Esophagus muscularis mucosa (tissue), 4 donors: ENCODE measurements at regions of chr3 and their contacts with region 1.

Region 1: GRCh38 chr3:38346587-38347410 is at the start of gene XYLB:
- DNase-seq: no peak
- H3K4me3 ChIP-seq: peak within 1 kb of the TSS; percentile 62 to 88 (median 75)
- H3K27ac ChIP-seq: peak within 1 kb of the TSS in 3 of 4 donors; percentile 42 to 69 (median 64)
- H3K4me1 ChIP-seq: peaks cover 5 to 20% (median 18%) of the 10 kb centered on the region in 4 donors
- H3K27me3 ChIP-seq: no peaks in the 10 kb centered on the region
- CTCF ChIP-seq: peak; percentile 85 to 91 (median 87)
- EP300 ChIP-seq: no peak
- POLR2A ChIP-seq: no peak
- total RNA-seq, gene XYLB: 0.65 to 2.5 (median 1.2) TPM

Region 2: GRCh38 chr3:37580237-37580636 is 766.6 kb before region 1 on chr3:
- intact Hi-C with region 1: no loop called
- DNase-seq: peak; percentile 93
- H3K4me3 ChIP-seq: no peak overlapping the region
- H3K27ac ChIP-seq: peak overlapping the region; percentile 13 to 60 (median 42)
- H3K4me1 ChIP-seq: peaks cover 20 to 32% (median 30%) of the 10 kb centered on the region in 4 donors
- H3K27me3 ChIP-seq: no peaks in the 10 kb centered on the region
- CTCF ChIP-seq: no peak
- EP300 ChIP-seq: no peak
- POLR2A ChIP-seq: no peak

Region 3: DNA sequence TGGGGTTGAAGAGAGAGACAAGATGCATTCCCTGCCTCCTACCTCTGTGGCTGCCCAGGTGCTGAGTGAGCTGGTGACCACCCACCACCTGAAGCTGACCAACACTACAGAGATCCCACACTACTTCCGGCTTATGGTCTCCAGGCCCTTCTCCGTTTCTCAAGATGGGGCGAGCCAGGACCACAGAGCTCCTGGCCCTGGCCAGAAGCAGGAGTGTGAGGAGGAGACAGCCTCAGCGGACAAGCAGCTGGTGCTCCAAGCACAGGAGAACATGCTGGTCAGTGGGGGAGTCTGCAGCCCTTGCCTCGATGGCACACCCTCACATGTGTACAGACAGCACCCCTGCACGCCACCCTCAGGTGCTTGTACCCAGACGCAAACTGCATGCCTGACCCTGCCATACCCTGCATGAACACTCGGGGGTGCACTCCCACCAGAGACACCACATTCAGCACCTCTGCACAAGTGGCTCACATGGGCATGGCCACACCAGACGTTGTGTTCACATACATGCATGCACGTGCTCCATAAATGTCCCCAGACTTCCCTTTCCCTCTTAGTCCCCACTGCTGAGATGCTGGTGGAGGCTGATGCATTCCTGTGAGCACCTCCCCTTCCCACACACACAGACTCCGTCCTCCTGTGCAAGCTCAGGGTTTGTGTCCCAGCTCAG is 228.9 kb before region 1 on chr3:
- intact Hi-C with region 1: loop called (anchors 2 kb)
- DNase-seq: no peak
- H3K4me3 ChIP-seq: no peak overlapping the region
- H3K27ac ChIP-seq: no peak overlapping the region
- H3K4me1 ChIP-seq: peaks cover 0 to 9% (median 0%) of the 10 kb centered on the region in 4 donors
- H3K27me3 ChIP-seq: no peaks in the 10 kb centered on the region
- CTCF ChIP-seq: peak; percentile 57 to 79 (median 63)
- EP300 ChIP-seq: no peak
- POLR2A ChIP-seq: no peak

Region 4: GRCh38 chr3:38458796-38459498 is 112.1 kb after region 1 on chr3:
- intact Hi-C with region 1: no loop called
- DNase-seq: no peak
- H3K4me3 ChIP-seq: peak overlapping the region in 1 of 4 donors; percentile 7
- H3K27ac ChIP-seq: peak overlapping the region in 3 of 4 donors; percentile 23 to 59 (median 50)
- H3K4me1 ChIP-seq: peaks cover 42 to 68% (median 63%) of the 10 kb centered on the region in 4 donors
- H3K27me3 ChIP-seq: no peaks in the 10 kb centered on the region
- CTCF ChIP-seq: no peak
- EP300 ChIP-seq: no peak
- POLR2A ChIP-seq: no peak

Region 5: DNA sequence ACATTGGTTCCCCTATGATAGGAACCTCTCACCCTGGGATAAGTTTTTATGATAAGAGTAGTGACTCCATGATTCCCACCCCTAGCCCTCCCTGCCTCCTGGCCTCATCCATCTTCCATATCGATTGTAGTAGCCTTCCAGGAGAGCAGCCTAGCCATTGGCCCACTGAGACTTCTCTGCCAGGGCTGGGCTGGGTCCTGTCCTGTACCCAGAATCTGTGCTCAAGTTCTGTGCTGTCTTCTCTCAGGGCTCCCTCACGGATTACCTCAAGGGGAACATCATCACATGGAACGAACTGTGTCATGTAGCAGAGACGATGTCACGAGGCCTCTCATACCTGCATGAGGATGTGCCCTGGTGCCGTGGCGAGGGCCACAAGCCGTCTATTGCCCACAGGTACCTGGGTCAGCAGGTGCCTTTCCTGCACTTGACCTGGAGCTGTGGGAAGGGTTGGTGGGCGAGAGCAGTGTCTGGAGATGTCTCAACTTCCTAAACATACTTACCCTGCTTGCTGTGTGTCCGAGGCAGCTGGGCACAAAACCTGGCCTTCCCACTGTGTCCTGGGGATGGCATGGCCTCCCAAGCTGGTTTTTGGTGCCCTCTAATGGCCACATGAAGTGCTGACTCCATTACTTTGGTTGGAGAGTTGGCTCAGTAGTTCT is 132.8 kb after region 1 on chr3:
- intact Hi-C with region 1: loop called (anchors 2 kb)
- DNase-seq: peak; percentile 89
- H3K4me3 ChIP-seq: no peak overlapping the region
- H3K27ac ChIP-seq: no peak overlapping the region
- H3K4me1 ChIP-seq: peaks cover 0 to 3% (median 0%) of the 10 kb centered on the region in 4 donors
- H3K27me3 ChIP-seq: no peaks in the 10 kb centered on the region
- CTCF ChIP-seq: peak; percentile 80 to 93 (median 80)
- EP300 ChIP-seq: no peak
- POLR2A ChIP-seq: no peak

Region 6: GRCh38 chr3:38651154-38651789 is 304.5 kb after region 1 on chr3:
- intact Hi-C with region 1: loop called (anchors 10 kb)
- DNase-seq: peak; percentile 93
- H3K4me3 ChIP-seq: peak overlapping the region in 1 of 4 donors; percentile 6
- H3K27ac ChIP-seq: no peak overlapping the region
- H3K4me1 ChIP-seq: peaks cover 12 to 31% (median 24%) of the 10 kb centered on the region in 4 donors
- H3K27me3 ChIP-seq: peaks cover 0 to 77% (median 19%) of the 10 kb centered on the region in 4 donors
- CTCF ChIP-seq: peak; percentile 15 to 92 (median 86)
- EP300 ChIP-seq: no peak
- POLR2A ChIP-seq: no peak